ENCODE measurements at regions of chr20 and their contacts with region 1.

Region 1: GRCh38 chr20:13384132-13384531 is 163.1 kb downstream of the ISM1 start:
- DNase-seq: no peak
- ATAC-seq: no peak
- H3K4me3 ChIP-seq: no peak overlapping the region
- H3K27ac ChIP-seq: no peak overlapping the region
- H3K4me1 ChIP-seq: no peaks in the 10 kb centered on the region
- H3K27me3 ChIP-seq: no peaks in the 10 kb centered on the region
- CTCF ChIP-seq: no peak

Region 2: GRCh38 chr20:13286607-13287006 is 97.5 kb before region 1 on chr20:
- CTCF ChIA-PET with region 1: no interaction called
- POLR2A ChIA-PET with region 1: no interaction called
- in situ Hi-C with region 1: no loop called
- intact Hi-C with region 1: no loop called
- DNase-seq: no peak
- ATAC-seq: no peak
- H3K4me3 ChIP-seq: no peak overlapping the region
- H3K27ac ChIP-seq: no peak overlapping the region
- H3K4me1 ChIP-seq: no peaks in the 10 kb centered on the region
- H3K27me3 ChIP-seq: no peaks in the 10 kb centered on the region; the same call in 1 of the 2 replicates
- CTCF ChIP-seq: no peak

Region 3: DNA sequence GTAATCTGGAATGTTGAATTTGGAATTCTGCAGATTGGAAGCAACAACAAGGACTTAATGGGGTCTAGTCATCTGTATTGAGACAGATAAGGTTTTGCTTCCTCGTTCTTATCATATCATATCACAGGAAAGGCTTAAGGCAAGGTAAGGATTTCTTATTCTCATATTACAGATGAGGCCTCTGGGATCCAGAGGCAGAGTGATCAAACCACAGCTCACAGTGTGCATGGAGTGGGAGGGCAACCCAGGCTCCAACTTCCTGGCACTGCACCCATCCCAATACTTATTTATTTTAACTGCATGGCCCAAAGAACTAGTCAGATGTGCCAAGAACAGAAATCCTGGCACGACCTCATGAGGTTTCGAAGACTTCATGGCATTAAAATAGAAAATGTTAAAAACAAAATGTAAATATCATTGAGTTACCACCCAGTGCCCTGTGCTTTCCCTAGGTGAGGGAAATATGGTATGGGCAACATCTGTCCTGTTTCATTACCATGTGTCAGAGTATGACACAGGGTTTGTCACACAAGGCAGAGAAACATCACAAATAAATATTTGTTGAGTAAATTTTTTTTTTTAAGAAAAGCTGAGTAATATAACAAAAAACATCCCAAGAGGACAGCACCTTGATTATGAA is 28.8 kb after region 1 on chr20:
- CTCF ChIA-PET with region 1: no interaction called
- POLR2A ChIA-PET with region 1: interaction called, 10 read pairs
- in situ Hi-C with region 1: no loop called
- intact Hi-C with region 1: no loop called
- DNase-seq: no peak
- ATAC-seq: no peak
- H3K4me3 ChIP-seq: no peak overlapping the region
- H3K27ac ChIP-seq: no peak overlapping the region
- H3K4me1 ChIP-seq: no peaks in the 10 kb centered on the region
- H3K27me3 ChIP-seq: no peaks in the 10 kb centered on the region
- CTCF ChIP-seq: no peak